ENCODE measurements at regions of chr7 and their contacts with region 1.

Region 1: DNA sequence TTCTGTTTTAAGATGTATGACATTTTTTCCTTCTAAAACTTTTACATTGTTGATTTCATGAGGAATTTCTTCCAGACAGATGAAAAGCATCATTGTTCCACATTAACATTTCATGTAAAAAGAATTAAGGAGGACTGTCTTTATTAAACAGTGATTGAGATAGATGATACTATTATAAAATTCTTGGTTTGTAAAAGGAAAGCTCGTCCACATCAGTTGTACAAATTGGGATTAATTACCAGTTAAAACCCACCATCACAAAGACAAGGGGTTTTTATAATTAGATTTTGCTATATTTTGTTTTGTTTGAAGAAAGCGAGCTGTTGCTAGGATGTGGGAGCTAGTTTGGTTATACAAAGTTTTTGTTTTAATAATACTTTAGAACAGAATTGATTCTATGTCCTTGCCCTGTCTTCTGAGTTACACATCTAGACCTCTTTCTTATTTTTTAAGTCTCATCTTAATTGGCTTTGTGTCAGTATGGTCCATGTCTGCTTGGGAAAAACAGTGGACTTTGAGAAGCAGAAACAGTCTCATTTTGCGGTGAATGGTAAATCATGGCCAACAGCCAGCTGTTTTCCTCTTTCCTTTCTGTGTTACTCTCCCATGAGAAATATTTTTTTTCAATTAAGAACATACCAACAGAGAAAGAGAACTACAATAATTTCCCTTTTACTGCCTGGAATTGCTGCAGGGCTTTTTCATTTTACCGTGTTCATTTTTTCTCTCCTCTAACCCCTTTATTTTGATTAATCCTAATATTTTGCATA is 3.2 kb downstream of the TES start:
- DNase-seq: no peak
- H3K4me3 ChIP-seq: peak overlapping the region in 1 of 2 donors; percentile 85
- H3K27ac ChIP-seq: peak overlapping the region; percentile 97
- H3K4me1 ChIP-seq: peaks cover 68% of the 10 kb centered on the region
- H3K27me3 ChIP-seq: no peaks in the 10 kb centered on the region
- CTCF ChIP-seq: no peak
- POLR2A ChIP-seq: no peak

Region 2: GRCh38 chr7:116041615-116042014 is 171.9 kb before region 1 on chr7:
- intact Hi-C with region 1: no loop called
- DNase-seq: no peak
- H3K4me3 ChIP-seq: no peak overlapping the region
- H3K27ac ChIP-seq: no peak overlapping the region
- H3K4me1 ChIP-seq: no peaks in the 10 kb centered on the region
- H3K27me3 ChIP-seq: no peaks in the 10 kb centered on the region
- CTCF ChIP-seq: no peak
- POLR2A ChIP-seq: no peak

Region 3: DNA sequence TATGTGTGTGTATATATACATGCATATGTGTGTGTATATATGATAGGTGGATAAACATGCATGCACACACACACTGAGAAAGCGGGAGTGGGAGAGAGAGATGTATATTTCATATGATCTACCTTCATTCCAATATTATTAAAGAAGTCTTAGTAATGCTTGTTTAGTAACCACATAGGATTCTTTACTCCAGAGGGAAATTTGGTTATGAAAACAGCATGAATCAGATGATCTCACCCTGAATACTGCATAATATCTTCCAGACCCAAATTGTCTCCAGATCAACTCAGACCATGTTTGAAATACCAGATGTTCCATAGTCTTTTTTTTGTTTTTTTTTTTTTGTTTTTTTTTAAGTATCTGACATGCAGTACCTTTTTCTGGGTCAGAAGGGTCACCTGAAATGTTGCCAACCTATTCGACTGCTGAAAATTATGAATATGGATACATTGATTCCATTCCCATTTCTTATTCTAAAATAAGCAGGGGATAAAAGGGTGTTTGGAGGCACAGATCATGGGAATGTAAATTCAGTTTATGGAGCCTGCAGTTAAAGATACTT is 14.2 kb after region 1 on chr7:
- intact Hi-C with region 1: loop called (anchors 2 kb)
- DNase-seq: no peak
- H3K4me3 ChIP-seq: no peak overlapping the region
- H3K27ac ChIP-seq: peak overlapping the region; percentile 12
- H3K4me1 ChIP-seq: peaks cover 53% of the 10 kb centered on the region
- H3K27me3 ChIP-seq: no peaks in the 10 kb centered on the region
- CTCF ChIP-seq: no peak
- POLR2A ChIP-seq: no peak

Measured in vagina (tissue), 2 donors.